Stomach (tissue), 19 donors: ENCODE measurements at regions of chr12 and their contacts with region 1.

Region 1: DNA sequence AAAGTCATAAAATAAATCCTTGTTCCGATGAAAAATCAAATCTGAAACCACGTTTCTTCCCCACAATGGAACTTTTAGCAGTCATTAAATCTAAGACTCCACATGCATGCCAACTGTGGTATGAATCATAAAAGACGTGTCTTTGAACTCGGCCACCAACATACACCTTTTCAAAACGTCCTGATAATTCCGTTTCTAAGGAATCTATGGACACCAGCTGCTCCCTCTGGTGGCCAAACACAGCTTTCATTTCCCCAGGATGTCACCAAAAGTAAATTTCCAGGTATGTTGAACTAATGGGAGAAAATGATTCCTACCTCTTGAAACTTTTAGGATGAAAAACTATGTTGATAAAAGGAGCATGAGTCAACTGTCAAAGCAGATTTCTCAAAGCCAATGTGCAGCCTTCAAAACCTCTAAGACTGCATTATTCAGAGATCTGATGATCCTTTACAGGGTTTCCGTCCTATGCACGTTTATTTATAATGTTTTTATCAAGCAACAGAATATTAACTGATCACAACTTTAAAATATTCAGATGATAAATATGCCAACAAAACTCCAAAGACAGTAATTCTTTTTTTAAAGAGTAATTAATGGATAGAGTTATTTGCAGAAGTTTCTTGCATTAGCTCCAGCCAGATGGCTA is 96.2 kb downstream of the CIT start:
- DNase-seq: peak; percentile 78 to 80
- H3K4me3 ChIP-seq: no peak overlapping the region
- H3K27ac ChIP-seq: no peak overlapping the region
- H3K4me1 ChIP-seq: peaks cover 0 to 11% (median 0%) of the 10 kb centered on the region in 4 donors
- H3K27me3 ChIP-seq: no peaks in the 10 kb centered on the region
- CTCF ChIP-seq: peak in 5 of 7 experiments; percentile 55 to 80 (median 77)
- EP300 ChIP-seq: no peak
- POLR2A ChIP-seq: no peak

Region 2: DNA sequence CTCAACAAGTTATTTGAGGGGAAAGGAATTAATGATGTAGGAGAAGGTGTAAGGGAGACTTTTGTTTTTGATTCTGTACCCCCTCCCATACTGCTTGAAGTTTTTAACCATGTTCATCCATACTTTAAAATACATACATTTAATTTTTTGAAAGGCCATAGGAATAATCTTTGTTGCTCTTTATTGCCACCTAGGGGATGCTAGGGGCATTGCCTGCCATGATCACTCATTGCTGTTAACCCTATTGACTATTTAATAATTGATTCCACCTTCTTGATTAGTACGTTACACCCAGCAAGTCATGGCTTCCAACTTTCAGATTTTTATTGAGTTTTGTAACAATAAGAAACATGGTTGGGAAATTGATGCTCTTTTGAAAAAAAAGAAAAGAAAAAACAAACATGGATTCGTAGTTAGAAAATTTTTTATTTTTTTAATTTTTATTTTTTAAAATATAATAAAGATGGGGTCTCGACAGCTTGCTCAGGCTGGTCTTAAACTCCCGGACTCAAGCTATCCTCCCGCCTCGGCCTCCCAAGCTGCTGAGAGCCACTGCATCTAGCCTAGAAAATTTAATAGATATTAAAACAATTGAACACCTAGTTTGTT is 121.5 kb before region 1 on chr12:
- intact Hi-C with region 1: loop called (anchors 5 kb)
- DNase-seq: peak in 1 of 2 donors; percentile 67
- H3K4me3 ChIP-seq: no peak overlapping the region
- H3K27ac ChIP-seq: no peak overlapping the region
- H3K4me1 ChIP-seq: no peaks in the 10 kb centered on the region
- H3K27me3 ChIP-seq: no peaks in the 10 kb centered on the region
- CTCF ChIP-seq: peak in 5 of 7 experiments; percentile 68 to 94 (median 77)
- EP300 ChIP-seq: no peak
- POLR2A ChIP-seq: no peak